ENCODE measurements at regions of chr14 and their contacts with region 1.

Region 1: GRCh38 chr14:49461529-49462401 is 124.4 kb downstream of the RPS29 start:
- DNase-seq: peak; percentile 92
- ATAC-seq: peak; percentile 89
- H3K4me3 ChIP-seq: no peak overlapping the region
- H3K27ac ChIP-seq: no peak overlapping the region
- H3K4me1 ChIP-seq: no peaks in the 10 kb centered on the region
- H3K27me3 ChIP-seq: peaks cover 36% of the 10 kb centered on the region
- CTCF ChIP-seq: peak; percentile 93

Region 2: GRCh38 chr14:48914382-48914781 is 547.4 kb before region 1 on chr14:
- CTCF ChIA-PET with region 1: no interaction called
- POLR2A ChIA-PET with region 1: no interaction called
- intact Hi-C with region 1: no loop called
- DNase-seq: no peak
- ATAC-seq: no peak
- H3K4me3 ChIP-seq: no peak overlapping the region
- H3K27ac ChIP-seq: no peak overlapping the region
- H3K4me1 ChIP-seq: no peaks in the 10 kb centered on the region
- H3K27me3 ChIP-seq: no peaks in the 10 kb centered on the region
- CTCF ChIP-seq: no peak

Region 3: GRCh38 chr14:49479432-49479831 is 17.7 kb after region 1 on chr14:
- CTCF ChIA-PET with region 1: interaction called, 4 read pairs
- POLR2A ChIA-PET with region 1: no interaction called
- intact Hi-C with region 1: loop called (anchors 2 kb)
- DNase-seq: peak; percentile 80
- ATAC-seq: peak; percentile 89
- H3K4me3 ChIP-seq: no peak overlapping the region
- H3K27ac ChIP-seq: peak overlapping the region; percentile 19
- H3K4me1 ChIP-seq: 0 out of 2 replicates have a peak, but pooled peaks cover 6% of the 10 kb centered on the region
- H3K27me3 ChIP-seq: peaks cover under 1% of the 10 kb centered on the region; the same call in 1 of the 2 replicates
- CTCF ChIP-seq: no peak

Region 4: GRCh38 chr14:49497725-49498348 is 36.1 kb after region 1 on chr14:
- CTCF ChIA-PET with region 1: interaction called, 72 read pairs
- POLR2A ChIA-PET with region 1: no interaction called
- intact Hi-C with region 1: loop called (anchors 1 kb)
- DNase-seq: peak; percentile 95
- ATAC-seq: peak; percentile 86
- H3K4me3 ChIP-seq: no peak overlapping the region
- H3K27ac ChIP-seq: no peak overlapping the region
- H3K4me1 ChIP-seq: no peaks in the 10 kb centered on the region
- H3K27me3 ChIP-seq: no peaks in the 10 kb centered on the region
- CTCF ChIP-seq: peak; percentile 98

Region 5: DNA sequence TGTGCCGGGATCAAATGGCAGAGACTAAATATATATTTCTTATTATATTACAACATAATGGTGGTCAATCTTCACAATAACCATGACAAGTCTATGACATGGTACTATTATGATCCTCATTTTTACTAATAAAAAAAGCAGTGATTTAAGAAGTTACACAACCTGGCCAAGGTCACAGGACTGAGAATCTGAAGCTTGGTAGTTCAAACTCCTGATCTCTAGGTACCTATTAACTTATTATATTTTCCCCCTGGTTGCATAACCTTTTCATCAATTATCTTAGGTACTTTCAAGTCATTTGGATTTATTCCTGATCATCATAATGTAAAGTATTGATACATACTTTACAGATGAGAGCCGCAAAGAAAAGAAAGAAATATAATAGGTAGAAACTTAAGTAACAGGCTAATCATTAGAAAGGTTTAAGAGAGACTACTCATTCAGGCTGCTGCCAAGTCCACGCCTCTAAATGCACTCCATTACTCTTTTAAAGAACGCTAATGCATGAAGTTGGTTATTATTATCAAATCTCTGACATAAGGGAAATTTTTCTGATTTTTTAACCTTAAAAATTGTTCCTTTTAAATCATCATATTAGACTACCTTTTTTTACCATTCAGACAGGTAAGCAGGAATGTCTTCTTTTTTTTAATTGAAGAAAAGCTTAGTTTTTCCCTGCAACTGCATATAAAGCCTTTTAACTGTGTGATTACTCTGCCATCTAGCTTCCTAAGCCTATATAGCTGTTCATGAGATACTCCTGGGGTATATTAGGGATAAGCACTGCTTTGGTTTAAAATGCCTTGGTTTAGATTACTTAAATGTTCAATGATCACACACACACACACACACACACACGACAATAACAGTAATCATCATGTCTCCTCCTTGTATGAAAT is 88.8 kb after region 1 on chr14:
- CTCF ChIA-PET with region 1: interaction called, 63 read pairs
- POLR2A ChIA-PET with region 1: no interaction called
- intact Hi-C with region 1: loop called (anchors 2 kb)
- DNase-seq: peak; percentile 73
- ATAC-seq: peak; percentile 75
- H3K4me3 ChIP-seq: no peak overlapping the region
- H3K27ac ChIP-seq: no peak overlapping the region
- H3K4me1 ChIP-seq: peaks cover 10% of the 10 kb centered on the region
- H3K27me3 ChIP-seq: no peaks in the 10 kb centered on the region
- CTCF ChIP-seq: peak; percentile 88

Region 6: DNA sequence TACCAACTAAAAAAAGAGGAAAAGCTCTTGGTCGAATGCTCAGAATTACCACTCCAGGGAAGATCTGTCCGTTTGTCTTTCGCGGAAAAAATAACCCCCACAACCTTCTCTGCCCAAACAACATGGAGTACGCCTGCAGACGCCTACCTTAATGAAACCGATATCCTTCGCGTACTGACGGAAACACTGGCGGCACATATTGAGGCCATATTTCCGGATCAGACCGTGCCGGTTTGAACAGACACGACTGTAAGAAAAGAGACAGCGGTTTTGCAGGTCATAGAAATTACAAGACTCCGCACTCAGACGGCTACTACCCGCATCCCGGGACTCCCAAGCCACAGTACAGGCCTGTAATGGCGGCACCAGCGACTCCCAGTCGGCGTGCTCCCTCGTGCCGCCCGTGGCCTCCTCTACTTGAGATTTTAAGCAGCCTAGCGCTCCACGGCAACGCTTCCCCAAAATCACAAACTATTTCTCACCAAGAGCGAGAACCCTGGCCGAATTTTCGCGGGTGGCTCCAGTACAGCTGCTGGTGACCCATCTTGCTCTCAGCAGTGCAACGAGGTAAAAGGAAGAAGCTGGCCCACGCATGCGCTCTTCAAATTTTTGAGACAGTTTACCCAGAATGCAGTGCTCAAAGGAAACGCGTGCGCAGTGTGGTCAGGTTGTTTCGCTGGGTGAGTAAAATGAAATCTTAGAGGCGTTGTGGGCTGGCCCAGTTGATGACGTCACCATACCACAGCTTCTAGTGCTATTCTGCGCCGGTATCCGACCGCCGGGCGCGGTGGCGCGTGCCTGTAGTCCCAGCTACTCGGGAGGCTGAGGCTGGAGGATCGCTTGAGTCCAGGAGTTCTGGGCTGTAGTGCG is 124.3 kb after region 1 on chr14 and contains the start of gene RPS29:
- CTCF ChIA-PET with region 1: interaction called, 6 read pairs
- POLR2A ChIA-PET with region 1: no interaction called
- intact Hi-C with region 1: loop called (anchors 2 kb)
- DNase-seq: peak; percentile 100
- ATAC-seq: peak; percentile 89
- H3K4me3 ChIP-seq: peak within 1 kb of the TSS; percentile 93
- H3K27ac ChIP-seq: peak within 1 kb of the TSS; percentile 59
- H3K4me1 ChIP-seq: peaks cover 20% of the 10 kb centered on the region
- H3K27me3 ChIP-seq: no peaks in the 10 kb centered on the region
- CTCF ChIP-seq: no peak
- total RNA-seq, gene RPS29: 1,420 and 1,912 TPM in 2 replicates

Region 7: DNA sequence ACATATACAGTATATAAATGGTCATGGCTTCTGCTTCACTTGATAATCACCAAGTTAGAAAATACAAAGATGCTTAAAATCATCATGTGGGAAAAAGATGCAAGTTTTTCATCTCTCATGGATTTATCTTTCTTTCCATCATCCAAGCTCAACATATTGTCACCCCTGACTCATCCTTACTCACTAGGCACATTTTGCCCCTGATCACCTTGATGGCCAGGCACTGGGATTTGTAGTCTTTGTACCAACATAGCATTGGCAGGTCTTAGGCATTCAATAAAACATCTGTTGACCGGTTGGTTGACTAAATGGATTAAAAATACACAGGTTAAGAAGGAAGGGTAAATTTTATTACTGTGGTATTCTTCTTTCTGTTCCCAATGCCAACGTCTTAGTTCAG is 334.3 kb after region 1 on chr14:
- CTCF ChIA-PET with region 1: no interaction called
- POLR2A ChIA-PET with region 1: no interaction called
- intact Hi-C with region 1: no loop called
- DNase-seq: peak; percentile 79
- ATAC-seq: peak; percentile 92
- H3K4me3 ChIP-seq: no peak overlapping the region
- H3K27ac ChIP-seq: no peak overlapping the region
- H3K4me1 ChIP-seq: peaks cover 11% of the 10 kb centered on the region
- H3K27me3 ChIP-seq: no peaks in the 10 kb centered on the region
- CTCF ChIP-seq: no peak

Measured in PC-3 (cell line).